Common myeloid progenitor, CD34-positive (primary cell): ENCODE measurements at regions of chr17 and their contacts with region 1.

Region 1: GRCh38 chr17:75498726-75499213 is 16.6 kb downstream of the CASKIN2 start:
- DNase-seq: peak in 2 of 3 donors; percentile 9 to 12
- H3K4me3 ChIP-seq: peak overlapping the region in 2 of 7 experiments; percentile 13 to 25
- H3K27ac ChIP-seq: peak overlapping the region in 1 of 2 experiments; percentile 25
- H3K4me1 ChIP-seq: peaks cover 3 to 28% (median 19%) of the 10 kb centered on the region in 4 experiments
- H3K27me3 ChIP-seq: no peaks in the 10 kb centered on the region

Region 2: GRCh38 chr17:75345514-75346167 is 153.1 kb before region 1 on chr17:
- CTCF ChIA-PET with region 1: no interaction called
- POLR2A ChIA-PET with region 1: no interaction called
- DNase-seq: peak in 2 of 3 donors; percentile 67 to 74
- H3K4me3 ChIP-seq: peak overlapping the region in 5 of 7 experiments; percentile 32 to 55 (median 37)
- H3K27ac ChIP-seq: peak overlapping the region; percentile 15 to 80
- H3K4me1 ChIP-seq: peaks cover 42 to 99% (median 84%) of the 10 kb centered on the region in 4 experiments
- H3K27me3 ChIP-seq: no peaks in the 10 kb centered on the region

Region 3: DNA sequence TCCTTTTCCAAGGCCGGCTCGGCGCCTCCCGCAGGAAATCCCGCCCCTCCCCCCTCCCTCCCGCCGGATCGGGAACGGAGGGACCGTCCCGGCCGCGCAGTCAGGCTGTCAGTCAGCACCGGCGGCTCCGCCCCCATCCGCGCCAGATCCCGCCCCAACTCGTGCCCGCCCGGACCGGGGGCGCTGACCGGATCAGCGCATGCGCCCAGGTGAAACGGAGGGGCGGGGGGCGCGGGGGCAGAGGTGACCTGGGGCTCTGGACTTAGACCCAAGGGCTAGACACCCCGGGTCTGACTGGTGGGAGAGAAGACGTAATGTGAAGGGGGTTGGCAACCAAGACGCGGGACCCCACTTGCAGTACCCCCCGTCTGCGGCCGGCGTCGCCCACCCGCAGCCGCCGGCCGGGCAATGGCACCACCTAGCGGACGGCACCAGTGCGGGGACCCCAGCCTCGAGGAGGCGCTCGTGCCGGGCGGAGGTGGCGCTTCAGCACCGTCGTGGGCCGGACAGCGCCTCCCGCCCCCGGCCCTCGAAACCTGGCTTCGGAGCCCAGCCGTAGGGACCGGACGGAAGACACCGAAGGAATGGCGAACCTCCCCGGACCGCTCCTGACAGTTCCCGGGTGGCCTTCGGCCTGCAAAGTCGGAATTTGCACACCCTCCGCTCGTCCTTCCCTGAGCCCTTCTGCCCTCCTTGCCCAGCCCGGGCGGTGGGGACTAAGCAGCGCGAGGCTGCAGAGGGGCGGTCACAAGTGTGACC is 16.9 kb after region 1 on chr17 and contains the start of gene CASKIN2:
- CTCF ChIA-PET with region 1: interaction called, 18 read pairs
- POLR2A ChIA-PET with region 1: interaction called, 3 read pairs
- DNase-seq: peak; percentile 83 to 92 (median 91)
- H3K4me3 ChIP-seq: peak within 1 kb of the TSS; percentile 67 to 91 (median 80)
- H3K27ac ChIP-seq: no peak within 1 kb of the TSS
- H3K4me1 ChIP-seq: peaks cover 17 to 40% (median 40%) of the 10 kb centered on the region in 4 experiments
- H3K27me3 ChIP-seq: no peaks in the 10 kb centered on the region